ENCODE measurements at regions of chr5 and their contacts with region 1.

Region 1: DNA sequence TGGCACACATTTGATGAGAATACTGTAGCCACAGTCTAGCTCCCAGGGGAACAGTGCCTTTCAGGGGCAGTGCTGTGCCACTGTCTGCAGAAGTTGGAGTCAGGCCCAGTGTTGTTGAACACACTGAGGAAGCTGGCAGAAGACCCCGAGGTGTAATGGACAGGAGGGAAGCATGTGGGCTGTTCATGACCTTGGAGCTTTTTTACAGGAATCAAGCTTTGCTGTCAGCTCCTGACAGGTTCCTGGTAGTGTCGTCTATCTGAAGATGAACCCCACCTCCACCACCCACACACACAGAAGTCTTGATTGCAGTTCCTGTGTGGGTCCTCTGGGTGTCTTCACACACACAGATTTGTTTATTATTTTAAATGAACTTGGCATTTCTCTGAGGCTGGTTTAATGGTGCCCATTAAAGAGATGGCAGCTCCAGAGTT is 40.3 kb upstream of the TNFAIP8 start:
- DNase-seq: peak; percentile 83
- H3K4me3 Mint-ChIP-seq: peak overlapping the region; percentile 36
- H3K27ac Mint-ChIP-seq: peak overlapping the region; percentile 96
- H3K4me1 Mint-ChIP-seq: peaks cover 94% of the 10 kb centered on the region
- H3K27me3 Mint-ChIP-seq: no peaks in the 10 kb centered on the region

Region 2: DNA sequence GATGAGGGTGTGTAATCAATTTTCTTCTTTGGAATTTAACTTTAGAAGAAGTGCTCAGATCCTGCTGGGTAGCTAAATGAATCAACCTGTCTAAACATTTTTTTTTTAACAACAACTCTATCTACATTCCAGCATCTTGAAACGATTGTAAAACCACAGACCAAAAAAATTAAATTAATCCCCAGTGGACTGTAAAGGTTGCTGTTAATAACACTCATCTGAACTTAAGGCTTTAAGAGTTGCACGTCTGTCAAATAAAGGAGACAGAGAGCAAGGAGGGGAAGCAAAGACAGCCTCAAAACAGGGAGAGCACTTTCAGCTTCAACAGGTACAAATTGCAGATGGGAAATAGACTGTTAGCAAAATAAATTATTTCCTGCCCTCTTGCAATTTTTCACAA is 875.7 kb before region 1 on chr5:
- CTCF ChIA-PET with region 1: no interaction called
- intact Hi-C with region 1: no loop called
- DNase-seq: no peak
- H3K4me3 Mint-ChIP-seq: no peak overlapping the region
- H3K27ac Mint-ChIP-seq: no peak overlapping the region
- H3K4me1 Mint-ChIP-seq: no peaks in the 10 kb centered on the region
- H3K27me3 Mint-ChIP-seq: no peaks in the 10 kb centered on the region

Region 3: DNA sequence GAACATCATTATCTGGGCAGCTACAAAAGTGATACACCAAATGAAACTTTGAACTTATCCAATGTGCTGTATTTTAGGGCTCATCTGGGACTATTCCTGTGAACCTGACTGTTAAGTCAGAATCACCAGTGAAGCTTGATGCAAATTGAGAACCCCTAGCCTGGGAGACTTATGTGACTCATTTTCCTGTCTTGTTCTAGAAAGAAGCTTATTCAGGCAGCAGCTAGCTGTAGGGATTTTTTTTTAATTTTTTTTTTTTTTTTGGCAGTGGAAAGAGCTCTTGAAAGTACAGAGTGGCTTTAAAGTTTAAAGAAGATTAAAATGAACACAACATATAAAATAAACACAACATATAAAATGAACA is 40.8 kb before region 1 on chr5:
- CTCF ChIA-PET with region 1: interaction called, 19 read pairs
- intact Hi-C with region 1: no loop called
- DNase-seq: peak; percentile 50
- H3K4me3 Mint-ChIP-seq: peak overlapping the region; percentile 72
- H3K27ac Mint-ChIP-seq: peak overlapping the region; percentile 97
- H3K4me1 Mint-ChIP-seq: peaks cover 88% of the 10 kb centered on the region
- H3K27me3 Mint-ChIP-seq: no peaks in the 10 kb centered on the region

Region 4: DNA sequence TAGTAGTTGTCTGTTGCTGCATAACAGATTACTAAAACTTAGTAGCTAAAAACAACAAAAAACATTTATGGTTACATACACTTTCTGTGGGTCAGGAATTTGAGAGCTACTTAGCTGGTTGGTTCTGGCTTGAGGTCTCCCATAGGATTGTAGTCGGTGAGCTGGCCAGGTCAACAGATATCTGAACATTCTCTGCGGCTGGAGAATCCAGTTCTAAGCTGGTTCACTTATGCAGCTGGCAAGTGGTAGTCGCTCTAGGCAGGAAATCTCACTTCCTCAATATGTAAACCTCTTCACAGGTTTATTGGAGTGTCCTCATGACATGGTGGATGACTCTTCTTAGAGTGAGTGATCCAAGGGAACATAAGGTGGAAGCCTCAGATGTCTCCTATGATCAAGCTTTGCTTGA is 25.4 kb before region 1 on chr5:
- CTCF ChIA-PET with region 1: interaction called, 13 read pairs
- intact Hi-C with region 1: no loop called
- DNase-seq: peak; percentile 44
- H3K4me3 Mint-ChIP-seq: peak overlapping the region; percentile 19
- H3K27ac Mint-ChIP-seq: peak overlapping the region; percentile 90
- H3K4me1 Mint-ChIP-seq: peaks cover 83% of the 10 kb centered on the region
- H3K27me3 Mint-ChIP-seq: no peaks in the 10 kb centered on the region

Region 5: GRCh38 chr5:119302916-119303897 is 12.3 kb before region 1 on chr5:
- CTCF ChIA-PET with region 1: interaction called, 10 read pairs
- intact Hi-C with region 1: loop called (anchors 2 kb)
- DNase-seq: no peak
- H3K4me3 Mint-ChIP-seq: peak overlapping the region; percentile 13
- H3K27ac Mint-ChIP-seq: peak overlapping the region; percentile 97
- H3K4me1 Mint-ChIP-seq: peaks cover 91% of the 10 kb centered on the region
- H3K27me3 Mint-ChIP-seq: no peaks in the 10 kb centered on the region

Region 6: DNA sequence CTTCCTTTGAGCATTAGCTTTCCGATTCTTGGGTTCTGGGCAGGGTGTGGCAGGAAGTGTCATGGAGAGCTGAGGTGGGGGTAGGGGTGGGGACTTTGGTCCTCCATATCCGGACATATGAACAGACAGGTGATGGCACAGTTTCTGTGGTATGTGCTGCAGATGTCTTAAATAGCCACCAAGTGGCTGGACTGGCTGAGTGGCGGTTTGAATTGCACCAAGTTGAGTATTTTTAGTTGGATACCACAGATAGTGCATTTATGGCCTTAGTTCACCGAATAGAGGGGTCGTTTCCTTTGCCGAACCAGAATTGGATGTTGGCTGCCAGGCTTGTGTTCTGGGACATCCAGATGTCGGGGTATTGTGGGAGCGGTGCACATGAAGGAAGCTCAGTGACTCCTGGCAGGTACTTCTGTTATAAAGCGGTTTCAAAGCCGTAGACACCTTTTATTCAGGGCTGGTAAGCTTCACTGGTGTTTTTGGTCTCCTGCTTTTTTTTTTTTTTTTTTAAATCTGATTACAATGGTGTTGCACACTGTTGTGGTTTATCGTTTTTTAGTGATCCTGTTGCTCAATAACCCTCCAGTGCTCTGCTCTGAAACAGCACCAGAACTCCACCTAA is 25.2 kb after region 1 on chr5:
- CTCF ChIA-PET with region 1: interaction called, 46 read pairs
- intact Hi-C with region 1: loop called (anchors 1 kb)
- DNase-seq: peak; percentile 68
- H3K4me3 Mint-ChIP-seq: peak overlapping the region; percentile 69
- H3K27ac Mint-ChIP-seq: peak overlapping the region; percentile 96
- H3K4me1 Mint-ChIP-seq: peaks cover 93% of the 10 kb centered on the region
- H3K27me3 Mint-ChIP-seq: no peaks in the 10 kb centered on the region

Region 7: DNA sequence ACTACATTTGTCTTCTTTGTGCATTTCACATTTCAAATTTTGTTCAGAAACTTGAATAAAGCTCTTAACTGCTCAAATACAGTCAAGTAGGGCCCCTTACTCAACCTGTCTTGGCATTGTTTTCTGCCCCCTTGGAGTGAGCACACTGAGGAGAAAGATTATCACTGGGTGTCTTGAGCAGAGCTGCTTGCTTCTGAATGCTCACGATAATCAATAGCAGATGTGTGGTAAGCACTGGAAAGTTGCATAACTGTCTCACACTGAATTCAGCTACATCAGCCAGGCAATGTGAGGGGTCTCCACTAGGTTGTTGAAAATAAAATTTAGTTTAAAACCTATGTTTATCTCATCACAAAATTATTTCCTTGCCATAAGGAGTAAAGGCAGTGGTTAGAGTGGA is 32.5 kb after region 1 on chr5:
- CTCF ChIA-PET with region 1: interaction called, 46 read pairs
- intact Hi-C with region 1: no loop called
- DNase-seq: no peak
- H3K4me3 Mint-ChIP-seq: no peak overlapping the region
- H3K27ac Mint-ChIP-seq: peak overlapping the region; percentile 88
- H3K4me1 Mint-ChIP-seq: peaks cover 86% of the 10 kb centered on the region
- H3K27me3 Mint-ChIP-seq: no peaks in the 10 kb centered on the region

Region 8: GRCh38 chr5:119355685-119356611 is 40.4 kb after region 1 on chr5 and contains the start of gene TNFAIP8:
- CTCF ChIA-PET with region 1: interaction called, 7 read pairs
- intact Hi-C with region 1: loop called (anchors 1 kb)
- DNase-seq: peak; percentile 91
- H3K4me3 Mint-ChIP-seq: peak within 1 kb of the TSS; percentile 98
- H3K27ac Mint-ChIP-seq: peak within 1 kb of the TSS; percentile 98
- H3K4me1 Mint-ChIP-seq: peaks cover 67% of the 10 kb centered on the region
- H3K27me3 Mint-ChIP-seq: no peaks in the 10 kb centered on the region
- total RNA-seq, gene TNFAIP8: 141 to 142 TPM

Region 9: GRCh38 chr5:119681734-119682133 is 366.2 kb after region 1 on chr5:
- CTCF ChIA-PET with region 1: no interaction called
- intact Hi-C with region 1: no loop called
- DNase-seq: no peak
- H3K4me3 Mint-ChIP-seq: no peak overlapping the region
- H3K27ac Mint-ChIP-seq: no peak overlapping the region
- H3K4me1 Mint-ChIP-seq: no peaks in the 10 kb centered on the region
- H3K27me3 Mint-ChIP-seq: peaks cover 3% of the 10 kb centered on the region

Region 10: DNA sequence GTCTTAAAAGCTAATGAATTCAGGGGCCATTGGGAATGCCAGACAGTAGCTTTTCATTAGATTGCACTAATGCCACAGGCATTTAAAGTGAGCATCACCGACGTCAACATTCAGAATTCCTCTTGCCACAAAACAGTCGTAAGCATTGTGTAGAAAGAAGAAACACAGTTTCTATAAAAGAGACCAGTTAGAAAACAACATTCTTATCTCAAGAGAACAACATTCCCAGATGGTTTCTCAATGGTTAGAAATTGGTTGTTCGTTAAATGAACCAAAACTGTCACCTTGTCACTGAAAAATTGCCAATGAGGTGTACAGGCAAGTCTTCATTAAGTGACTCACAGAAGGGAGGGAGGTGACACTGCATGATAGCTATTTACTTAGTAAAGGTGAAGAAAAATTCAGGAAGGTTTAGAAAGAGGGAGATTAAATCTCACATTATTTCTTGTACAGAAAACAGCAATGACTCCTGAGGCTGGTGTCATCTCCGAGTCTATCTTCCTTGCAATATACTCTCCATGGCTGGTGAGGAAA is 747.0 kb after region 1 on chr5:
- CTCF ChIA-PET with region 1: no interaction called
- intact Hi-C with region 1: no loop called
- DNase-seq: no peak
- H3K4me3 Mint-ChIP-seq: no peak overlapping the region
- H3K27ac Mint-ChIP-seq: no peak overlapping the region
- H3K4me1 Mint-ChIP-seq: no peaks in the 10 kb centered on the region
- H3K27me3 Mint-ChIP-seq: no peaks in the 10 kb centered on the region